HepG2 (cell line): ENCODE measurements at regions of chr14 and their contacts with region 1.

Region 1: DNA sequence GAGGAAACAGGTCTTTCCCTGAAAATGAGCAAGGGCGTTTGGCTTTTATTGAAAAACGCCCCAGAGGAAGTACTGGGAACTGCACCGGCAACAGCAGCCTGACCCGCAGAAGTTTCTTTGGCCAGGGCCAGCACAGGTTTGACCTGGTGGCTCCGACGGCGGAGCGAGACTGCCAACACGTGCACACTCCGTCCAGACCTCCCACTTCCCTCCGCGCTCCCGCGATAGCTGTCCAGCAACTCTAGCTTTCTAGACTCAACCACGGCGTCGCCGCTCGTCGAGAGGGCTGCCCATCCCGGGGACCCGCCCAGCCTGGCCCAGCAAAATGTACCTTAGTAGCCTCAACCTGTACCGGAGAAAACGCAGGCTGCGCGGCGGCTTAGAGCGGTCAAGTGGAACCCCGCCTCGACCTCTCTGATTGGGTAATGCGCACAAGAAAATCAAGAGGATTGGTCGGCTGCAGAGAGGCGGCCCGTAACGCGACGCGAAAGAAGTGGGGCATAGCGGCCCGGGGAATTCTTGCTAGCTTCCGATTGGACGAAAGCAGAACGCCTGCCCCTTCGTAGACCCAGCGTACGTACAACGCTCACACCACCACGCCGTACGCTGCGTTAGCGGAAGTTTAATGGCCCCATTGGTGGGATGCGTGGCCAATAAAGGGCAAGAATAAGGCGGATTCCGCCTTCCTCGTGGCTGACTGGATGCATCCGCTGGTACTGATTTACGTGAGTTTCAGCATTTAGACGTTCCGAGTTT is at the start of gene WDR89:
- DNase-seq: peak; percentile 99
- ATAC-seq: peak; percentile 96
- H3K4me3 ChIP-seq: peak within 1 kb of the TSS; percentile 66 to 77 (median 74)
- H3K27ac ChIP-seq: peak within 1 kb of the TSS; percentile 95
- H3K4me1 ChIP-seq: peaks cover 40% of the 10 kb centered on the region
- H3K27me3 ChIP-seq: no peaks in the 10 kb centered on the region
- CTCF ChIP-seq: peak; percentile 73
- EP300 ChIP-seq: 0 out of 4 replicates have a peak, but pooled peaks of 1 of the 2 experiments have one; percentile 12
- POLR2A ChIP-seq: peak; percentile 75 to 91
- RAD21 ChIP-seq: peak; percentile 69
- total RNA-seq, gene WDR89: 20.1 and 37.0 TPM in 2 replicates

Region 2: DNA sequence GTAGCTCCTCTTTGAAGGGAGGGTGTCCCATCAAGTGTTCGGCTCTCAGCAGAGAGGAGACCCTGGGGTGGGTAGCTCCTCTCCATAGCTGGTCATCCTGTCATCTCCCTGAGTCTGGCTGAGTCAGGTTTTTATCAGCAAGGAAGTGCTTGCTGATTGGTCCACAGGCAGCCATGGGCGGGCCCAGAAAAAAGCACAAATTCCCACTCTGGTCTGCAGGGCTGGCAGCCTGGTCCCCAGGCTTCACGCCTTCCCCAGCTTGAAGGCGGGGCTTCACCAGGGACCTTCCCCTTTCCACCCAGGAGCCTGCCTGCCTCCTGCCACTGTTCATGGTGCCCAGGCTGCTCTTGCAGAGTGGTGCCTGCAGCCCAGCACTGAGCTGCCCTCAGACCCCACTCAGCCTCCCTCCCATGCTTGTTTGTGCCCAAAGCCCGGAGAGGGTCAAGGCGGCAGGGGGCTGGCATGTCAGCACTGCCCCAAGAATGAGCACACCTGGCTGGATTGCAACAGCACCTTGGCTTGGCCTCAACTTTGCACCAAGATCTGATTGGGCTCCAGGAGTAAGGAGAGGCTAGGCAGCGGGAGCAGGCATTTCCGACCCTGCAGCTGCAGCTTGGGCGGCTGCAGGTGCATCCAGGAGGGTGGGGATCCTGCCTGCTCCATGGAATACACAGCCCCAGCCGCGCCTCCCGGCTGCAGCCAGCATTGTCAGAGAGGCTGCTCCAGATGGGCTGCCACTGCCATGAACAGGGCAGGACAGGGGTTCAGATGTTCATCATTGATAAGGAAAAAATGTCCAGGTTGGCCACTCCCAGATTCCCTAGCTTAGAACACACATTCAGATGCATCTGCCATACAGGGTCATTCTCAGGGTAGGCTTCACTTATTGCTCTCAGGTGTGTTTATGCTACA is 22.0 kb after region 1 on chr14:
- CTCF ChIA-PET with region 1: no interaction called
- POLR2A ChIA-PET with region 1: interaction called, 12 read pairs
- in situ Hi-C with region 1: no loop called
- intact Hi-C with region 1: loop called (anchors 1 kb)
- DNase-seq: peak; percentile 30
- ATAC-seq: peak; percentile 86
- H3K4me3 ChIP-seq: peak overlapping the region in 2 of 3 experiments; percentile 24 to 43; a peak in 2 of 6 replicates
- H3K27ac ChIP-seq: no peak overlapping the region
- H3K4me1 ChIP-seq: peaks cover 25% of the 10 kb centered on the region
- H3K27me3 ChIP-seq: no peaks in the 10 kb centered on the region
- CTCF ChIP-seq: no peak
- EP300 ChIP-seq: no peak
- POLR2A ChIP-seq: no peak
- RAD21 ChIP-seq: no peak